ENCODE measurements at regions of chr17 and their contacts with region 1.

Region 1: GRCh38 chr17:20009302-20010098 is at the start of gene SPECC1:
- DNase-seq: peak; percentile 79
- H3K4me3 ChIP-seq: peak within 1 kb of the TSS; percentile 52
- H3K27ac ChIP-seq: no peak within 1 kb of the TSS
- H3K4me1 ChIP-seq: peaks cover 5% of the 10 kb centered on the region
- H3K27me3 ChIP-seq: peaks cover 61% of the 10 kb centered on the region
- CTCF ChIP-seq: peak; percentile 85; the same call in 1 of the 2 replicates
- total RNA-seq, gene SPECC1: 5.8 and 6.8 TPM in 2 replicates

Region 2: DNA sequence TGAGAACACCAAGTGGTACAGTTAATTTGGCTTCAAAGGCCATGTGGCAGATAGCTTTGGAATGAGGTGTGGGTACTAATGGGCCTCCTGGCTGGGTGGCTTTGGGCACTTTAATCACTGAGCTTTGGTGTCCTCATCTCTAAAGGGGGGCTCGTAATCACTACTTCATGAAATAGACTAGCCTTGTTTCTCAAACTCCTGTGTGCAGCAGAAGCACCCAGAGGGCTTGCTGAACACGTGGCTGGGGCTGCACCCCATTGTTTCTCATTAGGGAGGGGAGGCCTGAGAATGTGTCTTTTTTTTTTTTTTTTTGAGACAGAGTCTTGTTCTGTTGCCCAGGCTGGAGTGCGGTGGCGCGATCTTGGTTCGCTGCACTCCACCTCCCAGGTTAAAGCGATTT is 766.6 kb before region 1 on chr17:
- CTCF ChIA-PET with region 1: interaction called, 10 read pairs
- POLR2A ChIA-PET with region 1: no interaction called
- intact Hi-C with region 1: no loop called
- DNase-seq: no peak
- H3K4me3 ChIP-seq: no peak overlapping the region
- H3K27ac ChIP-seq: no peak overlapping the region
- H3K4me1 ChIP-seq: peaks cover 16% of the 10 kb centered on the region
- H3K27me3 ChIP-seq: no peaks in the 10 kb centered on the region
- CTCF ChIP-seq: no peak

Region 3: DNA sequence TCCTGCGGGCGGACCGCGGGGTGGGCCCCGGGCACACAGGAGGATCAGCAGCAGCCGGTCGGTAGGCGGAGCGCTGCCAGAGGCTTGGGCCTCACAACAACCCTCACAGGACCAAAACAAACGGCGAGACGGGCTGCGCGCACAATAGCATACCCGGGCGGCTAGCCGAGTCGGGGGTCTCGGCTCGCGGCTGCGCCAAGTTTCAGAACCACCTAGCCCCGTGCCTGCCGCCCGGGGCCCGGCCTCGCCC is 142.5 kb before region 1 on chr17:
- CTCF ChIA-PET with region 1: no interaction called
- POLR2A ChIA-PET with region 1: no interaction called
- intact Hi-C with region 1: loop called (anchors 5 kb)
- DNase-seq: peak; percentile 74
- H3K4me3 ChIP-seq: peak overlapping the region; percentile 95
- H3K27ac ChIP-seq: peak overlapping the region; percentile 85
- H3K4me1 ChIP-seq: peaks cover 4% of the 10 kb centered on the region
- H3K27me3 ChIP-seq: no peaks in the 10 kb centered on the region
- CTCF ChIP-seq: peak; percentile 37; the same call in 1 of the 2 replicates

Region 4: GRCh38 chr17:20028443-20028842 is 18.9 kb after region 1 on chr17:
- CTCF ChIA-PET with region 1: no interaction called
- POLR2A ChIA-PET with region 1: no interaction called
- intact Hi-C with region 1: no loop called
- DNase-seq: no peak
- H3K4me3 ChIP-seq: no peak overlapping the region
- H3K27ac ChIP-seq: no peak overlapping the region
- H3K4me1 ChIP-seq: no peaks in the 10 kb centered on the region
- H3K27me3 ChIP-seq: peaks cover 9% of the 10 kb centered on the region
- CTCF ChIP-seq: no peak

Measured in A673 (cell line).